ENCODE measurements at regions of chr17 and their contacts with region 1.

Region 1: GRCh38 chr17:50547035-50547735 is at the start of gene SPATA20:
- DNase-seq: peak; percentile 74 to 94 (median 79)
- ATAC-seq: peak; percentile 85
- H3K4me3 ChIP-seq: peak within 1 kb of the TSS; percentile 56
- H3K4me3 Mint-ChIP-seq: peak within 1 kb of the TSS; percentile 71
- H3K27ac ChIP-seq: no peak within 1 kb of the TSS
- H3K27ac Mint-ChIP-seq: no peak within 1 kb of the TSS
- H3K4me1 ChIP-seq: peaks cover 25% of the 10 kb centered on the region
- H3K4me1 Mint-ChIP-seq: peaks cover 21% of the 10 kb centered on the region
- H3K27me3 ChIP-seq: no peaks in the 10 kb centered on the region
- H3K27me3 Mint-ChIP-seq: peaks cover 6% of the 10 kb centered on the region
- CTCF ChIP-seq: peak; percentile 92
- total RNA-seq, gene SPATA20: 10.2 to 10.3 TPM

Region 2: DNA sequence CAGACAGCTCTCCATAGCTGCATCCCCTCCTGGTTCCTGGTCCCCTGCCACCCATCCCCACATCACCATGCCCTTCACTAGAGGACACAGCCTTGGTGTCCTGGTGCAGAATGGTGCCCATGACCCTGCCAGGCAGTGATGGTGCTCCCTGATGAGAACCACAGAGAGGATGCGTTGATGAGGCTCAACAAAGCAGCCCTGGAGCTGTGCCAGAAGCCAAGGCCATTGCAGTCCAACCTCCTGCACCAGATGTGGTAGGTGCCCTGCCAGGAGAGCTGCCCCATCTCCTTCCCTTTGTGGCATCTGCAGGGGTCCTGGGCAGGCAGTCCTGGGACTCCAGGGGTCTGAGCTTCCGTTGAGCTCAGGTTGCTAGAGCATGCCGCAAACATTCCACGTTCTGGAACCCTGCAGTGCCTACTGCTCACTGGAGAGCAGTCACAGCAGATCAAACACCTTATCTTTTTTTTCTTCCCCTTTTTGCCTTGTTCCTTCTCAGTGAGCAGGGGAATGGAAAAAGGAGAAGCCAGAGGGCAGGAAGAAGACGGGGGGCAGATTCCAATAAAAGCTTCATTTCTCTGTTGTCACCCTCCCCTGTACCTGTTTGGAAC is 19.9 kb before region 1 on chr17:
- CTCF ChIA-PET with region 1: no interaction called
- POLR2A ChIA-PET with region 1: no interaction called
- intact Hi-C with region 1: no loop called
- DNase-seq: no peak
- ATAC-seq: no peak
- H3K4me3 ChIP-seq: no peak overlapping the region
- H3K4me3 Mint-ChIP-seq: no peak overlapping the region
- H3K27ac ChIP-seq: no peak overlapping the region
- H3K27ac Mint-ChIP-seq: no peak overlapping the region
- H3K4me1 ChIP-seq: peaks cover 2% of the 10 kb centered on the region
- H3K4me1 Mint-ChIP-seq: no peaks in the 10 kb centered on the region
- H3K27me3 ChIP-seq: peaks cover 21 to 26% of the 10 kb centered on the region in 2 experiments
- H3K27me3 Mint-ChIP-seq: peaks cover 41% of the 10 kb centered on the region
- CTCF ChIP-seq: no peak

Region 3: DNA sequence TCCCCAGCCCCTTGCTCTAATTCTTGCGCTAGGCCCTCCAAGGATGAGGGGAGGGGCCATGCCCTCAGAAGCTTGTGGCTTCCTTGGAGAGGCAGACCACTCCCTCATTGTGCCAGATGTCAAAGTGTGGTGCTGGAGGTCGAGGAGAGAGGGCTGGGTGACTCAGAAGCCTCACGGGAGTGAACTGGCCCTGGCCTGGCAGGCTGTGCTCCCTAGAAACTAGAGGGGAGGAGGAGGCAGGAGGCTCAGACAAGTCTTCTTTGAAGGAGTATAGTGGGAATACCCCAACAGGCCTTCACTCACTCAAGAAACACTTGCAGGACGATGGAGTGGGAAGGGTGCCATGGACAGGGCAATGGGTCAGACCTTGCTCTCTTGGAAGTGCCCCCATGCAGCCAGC is 142.1 kb after region 1 on chr17:
- CTCF ChIA-PET with region 1: no interaction called
- POLR2A ChIA-PET with region 1: no interaction called
- intact Hi-C with region 1: loop called in 1 of 2 experiments (anchors 2 kb)
- DNase-seq: no peak
- ATAC-seq: no peak
- H3K4me3 ChIP-seq: no peak overlapping the region
- H3K4me3 Mint-ChIP-seq: no peak overlapping the region
- H3K27ac ChIP-seq: no peak overlapping the region
- H3K27ac Mint-ChIP-seq: no peak overlapping the region
- H3K4me1 ChIP-seq: no peaks in the 10 kb centered on the region
- H3K4me1 Mint-ChIP-seq: no peaks in the 10 kb centered on the region
- H3K27me3 ChIP-seq: no peaks in the 10 kb centered on the region
- H3K27me3 Mint-ChIP-seq: no peaks in the 10 kb centered on the region
- CTCF ChIP-seq: no peak

Region 4: DNA sequence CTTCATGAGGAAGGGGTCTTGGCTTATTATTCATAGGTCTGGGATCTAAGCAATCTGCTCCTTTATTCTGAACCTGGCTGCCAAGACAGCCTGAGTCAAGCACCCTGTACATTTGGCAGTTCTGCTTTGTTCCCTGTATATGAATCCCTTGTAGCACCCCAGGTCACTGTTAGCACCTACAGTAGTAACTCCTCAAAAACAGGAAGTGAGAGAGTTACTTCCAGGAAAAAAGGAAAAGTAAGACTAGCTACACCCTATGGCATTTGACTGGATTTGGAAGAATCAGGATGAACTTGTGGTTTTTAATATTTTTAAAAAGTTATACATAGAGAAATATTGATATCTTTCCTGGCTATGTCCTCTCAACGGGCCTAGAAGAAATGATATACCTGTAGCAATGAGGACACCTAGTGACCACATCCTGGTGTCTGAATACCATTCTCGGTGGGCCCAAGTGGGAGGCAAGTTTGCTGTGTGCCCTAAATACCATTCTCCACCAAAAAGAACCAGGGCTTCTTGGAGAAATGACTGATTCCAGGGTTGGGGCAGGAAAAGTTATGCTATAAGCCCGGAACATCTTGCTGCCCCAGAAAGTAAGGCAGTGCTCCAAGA is 150.6 kb after region 1 on chr17:
- CTCF ChIA-PET with region 1: no interaction called
- POLR2A ChIA-PET with region 1: no interaction called
- intact Hi-C with region 1: loop called (anchors 2 to 5 kb)
- DNase-seq: peak in 2 of 14 experiments; percentile 19 to 21
- ATAC-seq: no peak
- H3K4me3 ChIP-seq: no peak overlapping the region
- H3K4me3 Mint-ChIP-seq: no peak overlapping the region
- H3K27ac ChIP-seq: no peak overlapping the region
- H3K27ac Mint-ChIP-seq: no peak overlapping the region
- H3K4me1 ChIP-seq: peaks cover 2% of the 10 kb centered on the region
- H3K4me1 Mint-ChIP-seq: peaks cover 26% of the 10 kb centered on the region
- H3K27me3 ChIP-seq: no peaks in the 10 kb centered on the region
- H3K27me3 Mint-ChIP-seq: no peaks in the 10 kb centered on the region
- CTCF ChIP-seq: no peak

Region 5: GRCh38 chr17:50841949-50842354 is 294.8 kb after region 1 on chr17:
- CTCF ChIA-PET with region 1: no interaction called
- POLR2A ChIA-PET with region 1: no interaction called
- intact Hi-C with region 1: loop called in 1 of 2 experiments (anchors 1 kb)
- DNase-seq: peak; percentile 23 to 72 (median 40)
- ATAC-seq: peak; percentile 62
- H3K4me3 ChIP-seq: no peak overlapping the region
- H3K4me3 Mint-ChIP-seq: no peak overlapping the region
- H3K27ac ChIP-seq: no peak overlapping the region
- H3K27ac Mint-ChIP-seq: no peak overlapping the region
- H3K4me1 ChIP-seq: peaks cover 5% of the 10 kb centered on the region
- H3K4me1 Mint-ChIP-seq: no peaks in the 10 kb centered on the region
- H3K27me3 ChIP-seq: no peaks in the 10 kb centered on the region
- H3K27me3 Mint-ChIP-seq: no peaks in the 10 kb centered on the region
- CTCF ChIP-seq: peak; percentile 62

Region 6: GRCh38 chr17:50956750-50957523 is 409.8 kb after region 1 on chr17:
- CTCF ChIA-PET with region 1: no interaction called
- POLR2A ChIA-PET with region 1: no interaction called
- intact Hi-C with region 1: loop called (anchors 2 to 5 kb)
- DNase-seq: peak; percentile 52 to 84 (median 62)
- ATAC-seq: peak; percentile 98
- H3K4me3 ChIP-seq: no peak overlapping the region
- H3K4me3 Mint-ChIP-seq: no peak overlapping the region
- H3K27ac ChIP-seq: no peak overlapping the region
- H3K27ac Mint-ChIP-seq: peak overlapping the region; percentile 28
- H3K4me1 ChIP-seq: peaks cover 9% of the 10 kb centered on the region
- H3K4me1 Mint-ChIP-seq: peaks cover 8% of the 10 kb centered on the region
- H3K27me3 ChIP-seq: no peaks in the 10 kb centered on the region
- H3K27me3 Mint-ChIP-seq: no peaks in the 10 kb centered on the region
- CTCF ChIP-seq: peak; percentile 86

Measured in CD4-positive, alpha-beta T cell (primary cell).